ENCODE measurements at regions of chr3 and their contacts with region 1.

Region 1: DNA sequence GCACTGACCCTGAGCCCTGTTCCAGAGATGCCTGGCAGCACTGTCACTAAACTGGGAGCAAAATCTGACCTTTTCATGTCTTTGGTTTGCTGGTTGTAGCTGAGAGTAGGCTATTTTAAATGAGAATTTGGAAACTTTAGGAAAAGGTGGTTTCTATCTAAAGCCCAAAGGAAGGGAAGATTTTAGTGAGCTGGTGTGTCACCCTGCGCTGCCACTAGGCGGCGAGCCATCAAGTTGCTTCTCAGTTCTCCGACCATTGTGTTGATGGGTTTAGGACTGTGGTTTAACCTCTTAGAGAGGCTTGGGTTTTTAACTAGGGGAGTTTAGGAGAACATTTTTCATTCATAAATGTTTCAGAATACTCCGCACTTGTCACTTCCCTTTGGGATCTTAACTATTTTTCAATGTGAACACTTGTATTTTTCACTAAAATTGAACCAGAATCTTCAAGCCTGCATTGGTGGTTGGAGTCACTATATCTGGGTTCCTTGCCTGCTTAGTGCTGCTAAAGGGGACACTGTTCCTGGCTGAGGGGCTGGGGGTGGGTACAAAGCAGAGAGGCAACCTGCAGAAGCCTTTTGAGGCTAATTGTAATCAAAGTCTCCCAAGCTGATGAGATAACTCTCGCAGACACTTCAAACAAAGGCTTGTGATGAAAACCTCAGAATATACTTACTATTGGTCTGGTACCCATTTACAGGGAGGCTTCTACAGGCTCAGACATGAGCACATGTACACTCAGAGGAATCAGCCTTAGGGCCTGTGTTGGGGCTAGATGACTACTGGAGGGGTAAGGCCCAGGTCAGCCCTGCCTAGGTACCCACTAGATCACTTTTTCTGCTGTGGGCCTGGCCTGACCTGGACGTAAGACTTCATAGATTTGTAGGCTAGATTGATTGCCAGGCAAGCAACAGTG is 16.8 kb downstream of the EXOSC7 start:
- DNase-seq: peak; percentile 37
- H3K4me3 Mint-ChIP-seq: no peak overlapping the region
- H3K27ac Mint-ChIP-seq: peak overlapping the region; percentile 76
- H3K4me1 Mint-ChIP-seq: peaks cover 44% of the 10 kb centered on the region
- H3K27me3 Mint-ChIP-seq: no peaks in the 10 kb centered on the region
- CTCF ChIP-seq: peak; percentile 35

Region 2: DNA sequence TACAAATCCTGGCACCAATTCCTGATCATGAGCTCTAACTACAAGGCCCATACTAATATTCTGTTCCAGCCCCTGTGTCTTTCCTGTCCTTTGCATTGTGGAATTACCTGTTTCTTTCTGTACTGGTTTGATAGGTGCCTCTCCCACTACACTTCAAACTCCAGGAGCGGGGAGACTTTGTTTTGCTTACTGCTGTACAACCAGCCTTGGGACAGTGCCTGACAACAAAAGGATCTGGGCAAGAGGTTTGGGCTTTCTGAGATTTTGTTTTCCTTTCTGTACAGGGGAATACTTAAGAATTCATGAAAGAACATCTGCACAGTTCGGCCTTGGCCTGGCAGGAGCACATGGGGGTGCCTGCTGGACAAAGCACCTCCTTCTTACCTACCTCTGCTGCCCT is 61.9 kb before region 1 on chr3:
- CTCF ChIA-PET with region 1: no interaction called
- POLR2A ChIA-PET with region 1: no interaction called
- intact Hi-C with region 1: no loop called
- DNase-seq: no peak
- H3K4me3 Mint-ChIP-seq: no peak overlapping the region
- H3K27ac Mint-ChIP-seq: no peak overlapping the region
- H3K4me1 Mint-ChIP-seq: no peaks in the 10 kb centered on the region
- H3K27me3 Mint-ChIP-seq: no peaks in the 10 kb centered on the region
- CTCF ChIP-seq: no peak

Region 3: DNA sequence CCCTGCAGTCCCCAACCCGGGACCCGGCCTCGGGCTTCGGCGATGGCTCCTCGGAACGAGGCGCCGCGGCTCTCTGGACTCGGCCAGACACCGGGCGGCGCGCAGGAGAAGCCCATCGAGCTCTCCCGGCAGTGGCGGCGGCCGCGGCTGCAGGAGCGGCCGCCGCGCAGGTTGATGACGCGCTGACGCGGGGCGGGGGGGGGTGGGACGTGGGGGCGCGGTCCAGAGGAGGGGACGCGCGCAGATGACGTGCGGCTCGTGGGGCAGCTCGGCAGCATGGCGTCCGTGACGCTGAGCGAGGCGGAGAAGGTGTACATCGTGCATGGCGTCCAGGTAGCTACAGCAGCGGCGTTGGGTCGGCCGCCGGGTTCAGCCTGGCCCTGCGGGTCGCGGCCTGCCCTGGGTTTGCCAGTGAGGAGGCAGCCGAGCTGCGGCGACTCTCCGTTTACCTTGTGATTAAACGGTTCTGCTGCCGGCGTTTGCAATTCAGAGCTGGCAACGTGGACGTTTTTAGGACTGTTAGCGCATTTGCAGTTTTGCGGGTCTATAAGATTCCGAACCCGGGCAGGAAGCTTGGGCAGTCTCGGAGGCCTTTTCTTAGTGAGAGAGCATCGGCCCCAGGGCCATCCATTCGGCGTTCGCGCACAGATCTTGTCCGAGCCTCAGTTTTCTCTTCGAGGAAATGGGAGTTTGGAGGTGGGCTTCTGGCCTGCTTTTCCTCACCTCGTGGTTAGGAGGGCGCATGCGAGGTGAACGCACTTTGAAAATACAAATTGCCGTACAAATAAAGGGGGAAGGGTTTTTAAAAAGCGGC is 16.6 kb before region 1 on chr3 and contains the starts of genes EXOSC7 and ZDHHC3:
- CTCF ChIA-PET with region 1: interaction called, 5 read pairs
- POLR2A ChIA-PET with region 1: interaction called, 60 read pairs
- intact Hi-C with region 1: no loop called
- DNase-seq: peak; percentile 84
- H3K4me3 Mint-ChIP-seq: peak within 1 kb of the TSS; percentile 99
- H3K27ac Mint-ChIP-seq: peak within 1 kb of the TSS; percentile 97
- H3K4me1 Mint-ChIP-seq: peaks cover 37% of the 10 kb centered on the region
- H3K27me3 Mint-ChIP-seq: no peaks in the 10 kb centered on the region
- CTCF ChIP-seq: no peak
- total RNA-seq, gene EXOSC7: 59.7 and 73.3 TPM in 2 replicates
- total RNA-seq, gene ZDHHC3: 37.7 and 40.1 TPM in 2 replicates

Region 4: DNA sequence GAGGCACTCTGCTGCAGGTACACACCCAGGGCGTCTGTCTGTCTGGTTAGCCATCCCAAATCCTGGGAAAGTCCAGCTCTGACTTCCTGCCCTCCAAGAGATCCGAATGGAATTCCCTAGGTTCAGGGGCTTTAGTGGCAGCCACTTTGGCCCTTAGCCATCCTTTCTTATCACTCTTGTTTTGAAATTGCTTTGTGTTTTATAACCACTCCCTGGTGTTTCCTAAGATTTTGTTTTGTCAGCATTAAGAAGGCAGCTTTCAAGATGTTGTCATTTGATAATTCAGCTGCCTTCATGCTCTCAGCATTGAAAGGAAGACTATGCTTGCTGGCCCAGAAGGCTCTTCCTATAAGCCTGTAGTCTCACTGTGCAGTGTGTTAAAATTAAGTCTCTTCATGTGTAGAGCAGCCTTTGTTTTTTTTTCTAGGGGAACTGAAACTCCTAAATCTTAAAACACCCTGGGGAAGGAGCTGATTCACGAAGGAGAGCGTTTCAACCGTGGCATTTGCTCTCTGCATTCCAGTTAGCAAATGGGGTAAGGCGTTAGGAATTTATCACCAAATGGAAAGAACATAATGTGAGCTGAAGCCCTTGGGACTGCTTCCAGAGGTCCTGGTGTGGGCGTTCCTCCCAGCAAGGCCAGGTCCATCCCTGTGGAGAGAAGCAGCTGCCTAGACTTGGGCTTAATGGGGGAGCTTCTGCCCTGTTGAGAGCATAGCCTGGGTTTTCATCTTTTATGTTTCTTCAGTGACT is 19.1 kb after region 1 on chr3:
- CTCF ChIA-PET with region 1: no interaction called
- POLR2A ChIA-PET with region 1: interaction called, 24 read pairs
- intact Hi-C with region 1: no loop called
- DNase-seq: peak; percentile 34
- H3K4me3 Mint-ChIP-seq: peak overlapping the region; percentile 31
- H3K27ac Mint-ChIP-seq: peak overlapping the region; percentile 87
- H3K4me1 Mint-ChIP-seq: peaks cover 26% of the 10 kb centered on the region
- H3K27me3 Mint-ChIP-seq: no peaks in the 10 kb centered on the region
- CTCF ChIP-seq: no peak